ENCODE measurements at regions of chr10 and their contacts with region 1.

Region 1: DNA sequence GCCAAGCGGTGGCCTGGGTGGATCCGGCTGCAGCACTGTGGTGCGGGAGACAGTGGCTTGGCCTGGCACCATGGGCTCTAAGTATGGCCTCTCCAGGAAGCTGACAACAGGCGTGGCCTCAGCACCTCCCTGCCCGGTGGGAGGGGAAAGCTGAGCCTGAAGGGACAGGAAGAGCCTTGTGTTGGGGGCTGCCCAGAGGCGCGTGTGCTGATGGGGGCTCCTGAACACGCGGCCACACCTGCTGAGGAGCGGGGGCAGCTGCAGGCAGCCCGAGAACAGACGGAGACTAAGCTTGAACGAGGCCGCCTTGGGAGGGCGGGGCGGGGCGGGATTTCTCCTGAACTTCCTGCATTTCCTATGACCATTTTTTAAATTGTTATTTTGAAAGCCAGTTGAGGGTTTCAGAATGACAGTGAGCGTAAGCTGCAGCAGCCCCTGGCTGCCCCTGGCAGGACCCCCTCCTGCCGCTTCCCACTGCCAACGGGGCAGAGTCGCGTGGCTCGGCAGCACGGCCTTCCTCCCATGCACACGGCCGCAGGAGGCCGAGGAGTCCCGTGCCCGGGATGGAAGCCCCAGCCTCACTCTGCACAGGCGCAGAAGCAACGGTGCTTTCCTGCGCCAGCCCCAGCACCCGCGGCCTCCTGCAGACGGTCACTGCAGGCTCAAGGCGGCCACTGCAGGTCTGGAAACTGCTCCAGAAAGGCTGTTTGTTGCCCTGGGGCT is 43.2 kb downstream of the DPYSL4 start:
- DNase-seq: peak in 2 of 4 donors; percentile 13 to 23
- ATAC-seq: no peak
- H3K4me3 ChIP-seq: no peak overlapping the region
- H3K27ac ChIP-seq: no peak overlapping the region
- H3K4me1 ChIP-seq: no peaks in the 10 kb centered on the region
- H3K27me3 ChIP-seq: no peaks in the 10 kb centered on the region
- CTCF ChIP-seq: no peak
- POLR2A ChIP-seq: no peak

Region 2: DNA sequence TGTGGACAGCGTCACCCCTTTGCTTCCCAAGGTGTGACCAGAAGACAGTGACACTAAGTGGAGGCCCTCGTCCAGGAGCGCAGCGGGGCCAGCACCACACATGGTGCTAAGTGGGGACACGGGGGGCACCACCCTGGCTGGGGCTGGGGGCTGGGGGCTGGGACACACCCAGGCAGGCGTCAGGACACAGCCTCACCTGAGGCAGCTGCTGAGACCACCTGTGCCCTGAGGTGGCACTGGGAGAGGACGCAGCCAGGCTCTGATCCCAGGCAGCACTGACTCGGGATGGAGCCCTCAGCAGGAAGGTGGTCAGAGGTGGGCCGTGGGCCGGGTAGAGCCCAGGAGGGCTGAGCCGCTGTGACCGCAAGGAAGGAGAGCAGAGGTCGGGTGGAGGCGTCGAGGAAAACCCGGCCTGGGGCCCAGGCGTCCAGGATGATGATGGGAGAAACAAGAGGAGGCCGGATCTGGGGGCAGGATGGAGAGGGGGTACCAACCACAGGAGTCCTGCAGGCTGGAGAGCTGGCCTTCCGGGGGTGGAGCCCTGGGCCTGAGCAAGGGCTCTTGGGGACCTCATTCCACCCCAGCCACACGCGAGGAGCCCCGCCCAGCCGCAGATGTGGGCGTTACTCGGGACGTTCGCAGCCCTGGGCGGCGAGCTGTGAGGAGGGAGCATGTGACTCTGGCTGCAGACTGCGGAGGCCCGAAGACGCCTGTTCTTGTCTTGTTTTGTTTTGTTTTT is 124.5 kb after region 1 on chr10:
- intact Hi-C with region 1: loop called (anchors 5 kb)
- DNase-seq: no peak
- ATAC-seq: no peak
- H3K4me3 ChIP-seq: no peak overlapping the region
- H3K27ac ChIP-seq: no peak overlapping the region
- H3K4me1 ChIP-seq: no peaks in the 10 kb centered on the region
- H3K27me3 ChIP-seq: no peaks in the 10 kb centered on the region
- CTCF ChIP-seq: no peak
- POLR2A ChIP-seq: no peak